Transverse colon (tissue), 4 donors: ENCODE measurements at regions of chr13 and their contacts with region 1.

Region 1: DNA sequence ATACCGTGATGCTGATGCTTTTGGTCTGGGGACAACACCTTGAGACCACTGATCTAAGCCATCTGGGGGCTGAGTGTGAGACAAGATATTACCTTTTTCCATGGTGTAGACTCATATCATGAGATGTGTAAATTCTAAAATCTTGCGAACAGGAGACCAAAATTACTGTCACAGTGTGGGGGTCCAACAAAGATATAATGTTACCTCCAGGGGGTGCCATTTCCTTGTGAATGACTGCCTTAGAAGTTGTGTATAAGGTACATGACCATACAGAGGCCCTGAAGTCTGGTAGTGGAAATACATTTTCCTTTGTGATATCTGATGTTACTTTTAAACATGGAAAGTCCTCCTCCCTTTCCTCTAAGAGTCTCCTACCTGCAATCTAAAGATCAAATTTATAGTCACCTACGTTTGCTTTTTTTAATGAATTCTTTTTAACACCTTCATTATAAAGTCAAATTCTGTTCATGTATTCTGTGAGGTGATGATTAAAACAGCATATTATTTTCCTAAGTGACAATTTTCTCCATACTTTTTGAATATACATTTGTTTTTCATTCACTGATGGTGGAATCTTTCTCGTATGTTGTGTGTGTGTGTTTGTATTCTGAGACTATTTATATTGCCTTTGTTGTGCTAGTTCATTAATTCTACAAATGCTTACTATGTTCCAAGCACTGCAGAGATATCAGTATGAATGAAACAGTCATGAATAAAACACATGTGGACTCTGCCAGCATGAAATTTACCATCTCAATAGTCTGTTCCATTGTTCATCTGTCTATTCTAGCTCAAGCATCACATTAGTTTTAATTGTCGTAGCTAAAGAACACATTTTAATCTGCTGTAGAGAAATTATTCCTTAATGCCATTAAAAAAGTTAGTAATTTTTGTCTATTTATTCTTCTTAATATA is 113.7 kb downstream of the RFC3 start:
- DNase-seq: no peak
- H3K4me3 ChIP-seq: no peak overlapping the region
- H3K27ac ChIP-seq: no peak overlapping the region
- H3K4me1 ChIP-seq: peaks cover 0 to 3% (median 0%) of the 10 kb centered on the region in 4 donors
- H3K27me3 ChIP-seq: no peaks in the 10 kb centered on the region
- CTCF ChIP-seq: peak; percentile 38 to 61 (median 52)
- EP300 ChIP-seq: no peak
- POLR2A ChIP-seq: no peak

Region 2: GRCh38 chr13:34076943-34077703 is 145.5 kb after region 1 on chr13:
- in situ Hi-C with region 1: loop called in 2 of 4 experiments (anchors 10 kb)
- intact Hi-C with region 1: loop called (anchors 10 kb)
- DNase-seq: no peak
- H3K4me3 ChIP-seq: no peak overlapping the region
- H3K27ac ChIP-seq: no peak overlapping the region
- H3K4me1 ChIP-seq: peaks cover 0 to 9% (median 0%) of the 10 kb centered on the region in 4 donors
- H3K27me3 ChIP-seq: no peaks in the 10 kb centered on the region
- CTCF ChIP-seq: peak; percentile 17 to 47 (median 41)
- EP300 ChIP-seq: no peak
- POLR2A ChIP-seq: no peak

Region 3: GRCh38 chr13:34277936-34278335 is 346.3 kb after region 1 on chr13:
- in situ Hi-C with region 1: no loop called
- intact Hi-C with region 1: no loop called
- DNase-seq: no peak
- H3K4me3 ChIP-seq: no peak overlapping the region
- H3K27ac ChIP-seq: no peak overlapping the region
- H3K4me1 ChIP-seq: no peaks in the 10 kb centered on the region
- H3K27me3 ChIP-seq: no peaks in the 10 kb centered on the region
- CTCF ChIP-seq: no peak
- EP300 ChIP-seq: no peak
- POLR2A ChIP-seq: no peak